HepG2 (cell line): ENCODE measurements at regions of chr1 and their contacts with region 1.

Region 1: GRCh38 chr1:234373064-234373958 is at the start of gene COA6:
- DNase-seq: peak; percentile 98
- ATAC-seq: peak; percentile 94
- H3K4me3 ChIP-seq: peak within 1 kb of the TSS; percentile 76 to 89 (median 80)
- H3K27ac ChIP-seq: peak within 1 kb of the TSS; percentile 94
- H3K4me1 ChIP-seq: peaks cover 51% of the 10 kb centered on the region
- H3K27me3 ChIP-seq: no peaks in the 10 kb centered on the region; a peak in 1 of 5 replicates
- CTCF ChIP-seq: peak; percentile 37; the same call in 1 of the 2 replicates
- EP300 ChIP-seq: peak; percentile 32 to 59; a peak in 2 of 4 replicates
- POLR2A ChIP-seq: peak; percentile 88
- RAD21 ChIP-seq: peak; percentile 31; the same call in 1 of the 2 replicates
- total RNA-seq, gene COA6: 104 and 158 TPM in 2 replicates

Region 2: GRCh38 chr1:234326497-234327366 is 46.6 kb before region 1 on chr1:
- CTCF ChIA-PET with region 1: no interaction called
- POLR2A ChIA-PET with region 1: interaction called, 37 read pairs
- in situ Hi-C with region 1: no loop called
- intact Hi-C with region 1: loop called (anchors 1 kb)
- DNase-seq: peak; percentile 24
- ATAC-seq: peak; percentile 57
- H3K4me3 ChIP-seq: no peak overlapping the region
- H3K27ac ChIP-seq: peak overlapping the region; percentile 76
- H3K4me1 ChIP-seq: peaks cover 53% of the 10 kb centered on the region
- H3K27me3 ChIP-seq: no peaks in the 10 kb centered on the region; a peak in 1 of 5 replicates
- CTCF ChIP-seq: peak; percentile 64
- EP300 ChIP-seq: no peak
- POLR2A ChIP-seq: no peak
- RAD21 ChIP-seq: peak; percentile 62

Region 3: GRCh38 chr1:234357831-234358230 is 15.5 kb before region 1 on chr1:
- CTCF ChIA-PET with region 1: no interaction called
- POLR2A ChIA-PET with region 1: interaction called, 12 read pairs
- in situ Hi-C with region 1: no loop called
- intact Hi-C with region 1: no loop called
- DNase-seq: no peak
- ATAC-seq: no peak
- H3K4me3 ChIP-seq: peak overlapping the region in 2 of 3 experiments; percentile 51 to 64; a peak in 3 of 6 replicates
- H3K27ac ChIP-seq: no peak overlapping the region
- H3K4me1 ChIP-seq: peaks cover 29% of the 10 kb centered on the region
- H3K27me3 ChIP-seq: no peaks in the 10 kb centered on the region; a peak in 1 of 5 replicates
- CTCF ChIP-seq: no peak
- EP300 ChIP-seq: no peak
- POLR2A ChIP-seq: no peak
- RAD21 ChIP-seq: no peak

Region 4: DNA sequence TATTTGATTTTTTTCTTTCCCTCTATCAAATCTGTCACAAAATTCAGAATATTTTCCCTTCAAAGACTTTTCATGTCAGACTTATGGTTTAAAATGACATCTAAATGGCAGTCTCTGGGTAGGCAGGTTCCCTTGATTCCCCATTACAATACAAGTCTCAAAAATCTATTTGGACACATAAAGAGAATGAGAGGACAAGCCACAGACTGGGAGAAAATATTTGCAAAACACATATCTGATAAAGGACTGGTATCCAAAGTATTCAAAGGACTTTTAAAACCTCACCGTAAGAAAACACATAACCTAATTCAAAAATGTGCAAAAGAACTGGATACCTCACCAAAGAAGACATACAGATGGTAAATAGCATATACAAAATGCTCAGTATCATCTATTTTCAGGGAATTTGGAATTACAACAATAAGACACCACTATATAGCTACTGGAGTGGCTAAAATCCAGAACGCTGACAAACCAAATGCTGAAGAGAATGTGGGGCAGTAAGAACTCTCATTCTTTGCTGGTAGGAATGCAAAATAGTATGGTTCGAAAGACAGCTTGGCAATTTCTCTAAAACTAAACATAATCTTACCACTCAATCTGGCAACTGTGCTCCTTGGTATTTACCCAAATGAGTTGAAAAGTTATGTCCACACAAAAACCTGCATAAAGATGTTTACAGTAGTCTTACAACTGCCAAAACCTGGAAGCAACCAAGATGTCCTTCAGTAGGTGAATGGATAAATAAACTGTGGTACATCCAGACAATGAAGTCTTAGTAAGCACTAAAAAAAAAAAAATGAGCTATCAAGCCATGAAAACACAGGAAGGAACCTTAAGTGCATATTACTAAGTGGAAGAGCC is 79.0 kb after region 1 on chr1:
- CTCF ChIA-PET with region 1: no interaction called
- POLR2A ChIA-PET with region 1: no interaction called
- in situ Hi-C with region 1: no loop called
- intact Hi-C with region 1: no loop called
- DNase-seq: no peak
- ATAC-seq: no peak
- H3K4me3 ChIP-seq: no peak overlapping the region
- H3K27ac ChIP-seq: no peak overlapping the region
- H3K4me1 ChIP-seq: peaks cover 12% of the 10 kb centered on the region; the same call in 1 of the 2 replicates
- H3K27me3 ChIP-seq: no peaks in the 10 kb centered on the region
- CTCF ChIP-seq: no peak
- EP300 ChIP-seq: no peak
- POLR2A ChIP-seq: no peak
- RAD21 ChIP-seq: no peak